ENCODE measurements at regions of chr2 and their contacts with region 1.

Region 1: DNA sequence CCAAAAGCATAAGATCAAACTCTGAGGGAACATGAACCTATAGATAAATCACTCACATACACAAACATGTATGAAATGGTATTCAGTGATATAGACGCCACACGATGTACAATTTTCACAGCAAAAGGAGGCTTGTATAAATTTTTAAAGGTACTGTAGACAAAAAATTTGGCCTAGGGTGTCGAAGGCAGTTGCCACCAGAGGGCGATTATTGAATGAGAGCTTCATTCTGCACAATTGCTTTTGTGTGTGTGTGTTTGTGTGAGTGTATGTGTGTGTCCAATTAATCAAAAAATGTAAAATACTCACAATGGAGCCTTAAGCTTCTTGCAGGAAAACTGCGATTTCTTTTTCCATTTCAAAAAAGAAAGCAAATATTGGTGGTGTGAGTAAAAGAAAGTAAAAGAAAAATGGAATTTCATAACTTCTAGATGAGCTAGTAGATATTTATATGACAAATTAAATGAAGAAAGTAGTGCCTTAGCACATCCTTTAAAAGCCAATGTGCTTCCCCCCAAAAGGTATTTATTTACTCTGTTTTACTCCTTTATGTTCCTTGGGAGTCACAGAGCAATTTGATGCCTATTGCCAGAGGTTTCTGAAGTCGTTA is 800.1 kb downstream of the SATB2 start:
- DNase-seq: no peak
- H3K4me3 ChIP-seq: no peak overlapping the region
- H3K27ac ChIP-seq: no peak overlapping the region
- H3K27me3 ChIP-seq: no peaks in the 10 kb centered on the region
- CTCF ChIP-seq: peak; percentile 65

Region 2: GRCh38 chr2:198309673-198310280 is 347.8 kb before region 1 on chr2:
- CTCF ChIA-PET with region 1: interaction called, 11 read pairs
- POLR2A ChIA-PET with region 1: no interaction called
- DNase-seq: peak; percentile 10
- H3K4me3 ChIP-seq: no peak overlapping the region
- H3K27ac ChIP-seq: no peak overlapping the region
- H3K27me3 ChIP-seq: no peaks in the 10 kb centered on the region
- CTCF ChIP-seq: peak; percentile 91

Region 3: DNA sequence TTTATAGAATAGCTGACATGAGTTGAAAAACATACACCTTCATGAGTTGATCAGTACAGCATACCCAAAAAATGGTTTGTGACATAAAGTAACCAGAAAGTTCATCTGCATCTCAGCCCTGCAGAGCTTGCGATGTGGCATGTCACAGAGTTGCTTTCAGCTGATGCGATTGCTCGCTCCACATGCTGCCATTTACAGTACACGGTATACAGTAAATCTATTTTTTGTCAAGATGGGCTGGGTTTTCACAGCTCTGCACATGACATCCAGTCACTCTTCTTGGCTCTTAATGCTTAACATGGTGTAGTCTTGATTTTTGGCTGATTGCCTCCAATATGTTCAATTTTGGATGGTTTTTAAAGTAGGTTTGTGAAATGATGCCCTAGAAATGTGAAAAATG is 11.8 kb before region 1 on chr2:
- CTCF ChIA-PET with region 1: interaction called, 18 read pairs
- POLR2A ChIA-PET with region 1: no interaction called
- DNase-seq: no peak
- H3K4me3 ChIP-seq: no peak overlapping the region
- H3K27ac ChIP-seq: no peak overlapping the region
- H3K27me3 ChIP-seq: no peaks in the 10 kb centered on the region
- CTCF ChIP-seq: no peak

Region 4: DNA sequence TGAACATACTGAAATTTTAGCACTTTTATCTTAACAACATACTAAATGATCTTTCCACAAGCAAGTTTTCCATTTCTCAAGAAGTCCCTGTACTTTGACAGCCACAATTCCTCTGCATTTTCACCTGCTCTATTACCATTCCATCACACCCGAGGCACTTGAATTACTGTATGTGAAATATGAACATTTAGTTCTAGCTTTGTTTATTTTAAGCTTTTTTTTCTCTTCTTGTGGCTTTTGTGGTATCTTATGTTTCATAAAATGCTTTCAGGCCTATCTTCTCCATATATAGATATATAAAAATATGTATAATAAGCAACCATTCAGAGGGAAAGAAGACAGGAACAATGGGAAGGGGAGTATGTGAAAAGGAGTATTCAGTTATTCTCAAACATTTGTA is 106.2 kb after region 1 on chr2:
- CTCF ChIA-PET with region 1: no interaction called
- POLR2A ChIA-PET with region 1: no interaction called
- DNase-seq: no peak
- H3K4me3 ChIP-seq: no peak overlapping the region
- H3K27ac ChIP-seq: no peak overlapping the region
- H3K27me3 ChIP-seq: no peaks in the 10 kb centered on the region
- CTCF ChIP-seq: no peak